A549 (cell line): ENCODE measurements at regions of chr1 and their contacts with region 1.

Region 1: DNA sequence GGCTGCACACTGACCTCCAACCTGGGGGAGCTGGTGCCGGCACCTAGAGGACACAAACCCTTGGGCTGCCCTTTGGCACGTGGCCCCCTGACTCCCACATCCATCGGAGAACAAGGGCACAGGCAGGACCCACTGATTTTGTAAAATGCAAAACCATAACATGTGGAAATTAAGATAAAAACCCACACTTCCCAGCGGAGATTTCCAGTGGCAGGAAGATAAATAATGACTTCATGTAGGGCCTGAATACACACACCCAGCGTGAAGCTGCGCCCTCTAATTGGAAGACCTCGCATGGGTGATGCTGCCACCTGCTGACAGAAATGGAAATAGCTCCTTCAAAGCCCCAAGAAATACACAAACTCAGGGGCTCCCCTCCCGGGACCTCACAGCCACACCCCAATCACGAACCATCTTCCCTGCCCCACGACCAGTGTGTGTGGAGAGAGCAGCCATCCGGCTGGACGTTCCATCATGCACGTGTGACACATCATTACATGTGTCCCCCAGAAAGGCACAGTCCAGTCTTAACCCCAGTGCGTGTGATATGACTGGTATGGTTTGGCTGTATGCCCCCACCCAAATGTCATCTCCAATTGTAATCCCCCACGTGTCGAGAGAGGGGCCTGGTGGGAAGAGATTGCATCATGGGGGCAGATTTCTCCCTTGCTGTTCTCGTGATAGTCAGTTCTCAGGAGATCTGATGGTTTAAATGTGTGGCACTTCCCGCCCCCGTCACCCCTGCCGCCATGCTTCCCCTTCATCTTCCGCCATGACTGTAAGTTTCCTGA is 5.7 kb upstream of the TPRG1L start:
- DNase-seq: peak; percentile 61 to 72
- ATAC-seq: peak; percentile 68 to 83
- H3K4me3 ChIP-seq: no peak overlapping the region
- H3K27ac ChIP-seq: no peak overlapping the region
- H3K4me1 ChIP-seq: peaks cover 13% of the 10 kb centered on the region; the same call in 2 of the 3 replicates
- CTCF ChIP-seq: peak; percentile 62
- EP300 ChIP-seq: no peak
- POLR2A ChIP-seq: no peak
- RAD21 ChIP-seq: peak; percentile 52 to 63

Region 2: DNA sequence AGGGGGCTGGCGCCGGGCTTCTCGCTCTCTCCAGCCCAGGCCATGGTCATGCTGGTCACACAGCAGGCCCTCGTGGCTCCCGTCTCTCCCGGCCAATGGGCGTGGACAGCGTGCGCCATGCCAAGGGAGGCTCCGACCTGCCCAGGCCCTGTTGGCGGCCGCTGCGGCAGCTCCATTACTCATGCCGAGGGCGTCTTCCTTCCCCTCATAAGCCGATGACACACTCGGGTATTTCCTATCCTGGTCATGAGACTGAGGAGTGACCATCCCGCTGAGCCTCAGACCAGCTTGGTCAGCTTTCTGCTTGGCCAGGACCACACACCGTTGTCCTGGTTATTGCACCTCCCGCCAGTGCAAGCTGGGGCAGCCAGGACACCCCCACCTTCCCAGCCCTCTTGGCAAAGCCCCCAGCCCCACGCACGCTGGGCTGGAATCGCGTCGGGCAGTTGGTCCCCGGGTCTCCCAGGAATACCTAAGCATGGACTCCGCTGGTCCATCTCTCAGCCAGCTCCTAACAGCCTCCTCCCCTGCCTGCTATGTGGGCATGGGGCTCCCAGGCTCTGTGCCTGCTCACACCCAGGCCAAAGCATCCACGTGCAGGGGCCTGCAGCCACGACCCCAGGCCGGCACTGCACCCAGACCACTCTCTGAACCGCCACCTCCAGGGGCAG is 114.8 kb before region 1 on chr1:
- CTCF ChIA-PET with region 1: interaction called, 13 read pairs
- POLR2A ChIA-PET with region 1: no interaction called
- DNase-seq: peak; percentile 65 to 74
- ATAC-seq: peak; percentile 75 to 88
- H3K4me3 ChIP-seq: no peak overlapping the region
- H3K27ac ChIP-seq: peak overlapping the region; percentile 76 to 93
- H3K4me1 ChIP-seq: peaks cover 21% of the 10 kb centered on the region
- CTCF ChIP-seq: no peak
- EP300 ChIP-seq: peak in 1 of 2 experiments; percentile 27; a peak in 1 of 5 replicates
- POLR2A ChIP-seq: no peak
- RAD21 ChIP-seq: no peak

Region 3: GRCh38 chr1:3564921-3565827 is 53.9 kb before region 1 on chr1:
- CTCF ChIA-PET with region 1: interaction called, 81 read pairs
- POLR2A ChIA-PET with region 1: interaction called, 3 read pairs
- DNase-seq: peak in 1 of 2 experiments; percentile 73
- ATAC-seq: peak in 1 of 2 experiments; percentile 80; a peak in 3 of 6 replicates
- H3K4me3 ChIP-seq: no peak overlapping the region
- H3K27ac ChIP-seq: no peak overlapping the region
- H3K4me1 ChIP-seq: no peaks in the 10 kb centered on the region
- CTCF ChIP-seq: peak; percentile 72
- EP300 ChIP-seq: no peak
- POLR2A ChIP-seq: no peak
- RAD21 ChIP-seq: peak; percentile 84 to 85

Region 4: GRCh38 chr1:3598051-3598491 is 21.0 kb before region 1 on chr1:
- CTCF ChIA-PET with region 1: interaction called, 10 read pairs
- POLR2A ChIA-PET with region 1: no interaction called
- DNase-seq: no peak
- ATAC-seq: no peak
- H3K4me3 ChIP-seq: no peak overlapping the region
- H3K27ac ChIP-seq: no peak overlapping the region
- H3K4me1 ChIP-seq: no peaks in the 10 kb centered on the region
- CTCF ChIP-seq: no peak
- EP300 ChIP-seq: no peak
- POLR2A ChIP-seq: no peak
- RAD21 ChIP-seq: no peak